Activated CD4-positive, alpha-beta T cell treated with anti-CD3 and anti-CD28 coated beads, Interleukin-2, amount 10 ng/mL, durations not matched to agents 24 days and 14 days (primary cell): ENCODE measurements at regions of chr15 and their contacts with region 1.

Region 1: GRCh38 chr15:51776952-51777574 is 25.7 kb downstream of the TMOD2 start:
- DNase-seq: peak; percentile 90
- H3K4me3 Mint-ChIP-seq: no peak overlapping the region
- H3K27ac Mint-ChIP-seq: no peak overlapping the region
- H3K4me1 Mint-ChIP-seq: peaks cover 4% of the 10 kb centered on the region
- H3K27me3 Mint-ChIP-seq: no peaks in the 10 kb centered on the region

Region 2: GRCh38 chr15:51649659-51650521 is 127.2 kb before region 1 on chr15:
- intact Hi-C with region 1: loop called (anchors 1 kb)
- DNase-seq: peak; percentile 87
- H3K4me3 Mint-ChIP-seq: no peak overlapping the region
- H3K27ac Mint-ChIP-seq: no peak overlapping the region
- H3K4me1 Mint-ChIP-seq: peaks cover 2% of the 10 kb centered on the region
- H3K27me3 Mint-ChIP-seq: peaks cover 12% of the 10 kb centered on the region